ENCODE measurements at regions of chr22 and their contacts with region 1.

Region 1: DNA sequence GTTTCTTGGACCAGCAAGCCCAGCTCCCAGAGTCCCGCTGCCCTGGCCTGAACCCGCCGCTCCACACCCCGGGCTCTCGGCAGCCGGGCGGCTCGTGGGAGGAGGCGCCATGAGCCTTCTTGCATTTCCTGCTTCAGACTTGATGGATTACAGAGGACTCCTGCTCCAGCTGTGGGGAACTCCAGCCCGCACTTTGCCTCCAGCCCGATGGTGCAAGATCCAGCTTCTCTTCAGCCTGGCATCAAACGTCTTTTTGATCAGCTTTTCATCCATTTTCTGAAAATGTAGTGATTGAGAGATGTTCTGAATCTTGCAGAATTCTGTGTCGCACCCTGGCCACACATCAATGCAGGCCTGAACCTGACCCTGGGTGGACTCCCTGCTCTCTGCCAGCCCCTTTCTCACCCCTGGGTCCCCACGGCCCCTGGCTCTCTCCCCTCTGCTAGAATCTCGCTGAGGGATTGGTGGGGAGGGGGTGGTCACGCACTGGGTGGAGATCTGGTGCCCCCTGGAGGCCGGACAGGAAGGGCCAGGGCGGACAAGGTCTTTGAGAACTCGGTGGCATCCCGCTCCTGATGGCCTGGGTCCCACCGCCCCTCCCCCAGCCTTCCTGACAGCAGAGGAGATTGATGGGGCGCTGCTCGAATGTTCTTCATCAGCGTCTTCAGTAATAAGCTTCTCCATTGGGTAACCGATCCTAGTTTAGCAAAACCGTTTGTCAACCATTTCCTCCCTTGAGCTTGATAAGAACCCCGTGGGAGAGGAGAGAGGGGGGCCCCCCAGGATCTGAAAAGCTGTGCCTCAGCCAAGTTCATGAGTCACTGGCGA is 12.1 kb upstream of the NFAM1 start:
- DNase-seq: peak; percentile 85

Region 2: GRCh38 chr22:42169055-42169469 is 275.2 kb before region 1 on chr22:
- CTCF ChIA-PET with region 1: interaction called, 18 read pairs
- POLR2A ChIA-PET with region 1: no interaction called
- DNase-seq: peak; percentile 81